ENCODE measurements at regions of chr17 and their contacts with region 1.

Region 1: GRCh38 chr17:28925912-28926365 is 23.1 kb upstream of the DHRS13 start:
- DNase-seq: peak; percentile 70
- ATAC-seq: peak; percentile 94
- H3K4me3 Mint-ChIP-seq: peak overlapping the region; percentile 26
- H3K27ac Mint-ChIP-seq: peak overlapping the region; percentile 88
- H3K4me1 Mint-ChIP-seq: peaks cover 55% of the 10 kb centered on the region
- H3K27me3 Mint-ChIP-seq: no peaks in the 10 kb centered on the region

Region 2: DNA sequence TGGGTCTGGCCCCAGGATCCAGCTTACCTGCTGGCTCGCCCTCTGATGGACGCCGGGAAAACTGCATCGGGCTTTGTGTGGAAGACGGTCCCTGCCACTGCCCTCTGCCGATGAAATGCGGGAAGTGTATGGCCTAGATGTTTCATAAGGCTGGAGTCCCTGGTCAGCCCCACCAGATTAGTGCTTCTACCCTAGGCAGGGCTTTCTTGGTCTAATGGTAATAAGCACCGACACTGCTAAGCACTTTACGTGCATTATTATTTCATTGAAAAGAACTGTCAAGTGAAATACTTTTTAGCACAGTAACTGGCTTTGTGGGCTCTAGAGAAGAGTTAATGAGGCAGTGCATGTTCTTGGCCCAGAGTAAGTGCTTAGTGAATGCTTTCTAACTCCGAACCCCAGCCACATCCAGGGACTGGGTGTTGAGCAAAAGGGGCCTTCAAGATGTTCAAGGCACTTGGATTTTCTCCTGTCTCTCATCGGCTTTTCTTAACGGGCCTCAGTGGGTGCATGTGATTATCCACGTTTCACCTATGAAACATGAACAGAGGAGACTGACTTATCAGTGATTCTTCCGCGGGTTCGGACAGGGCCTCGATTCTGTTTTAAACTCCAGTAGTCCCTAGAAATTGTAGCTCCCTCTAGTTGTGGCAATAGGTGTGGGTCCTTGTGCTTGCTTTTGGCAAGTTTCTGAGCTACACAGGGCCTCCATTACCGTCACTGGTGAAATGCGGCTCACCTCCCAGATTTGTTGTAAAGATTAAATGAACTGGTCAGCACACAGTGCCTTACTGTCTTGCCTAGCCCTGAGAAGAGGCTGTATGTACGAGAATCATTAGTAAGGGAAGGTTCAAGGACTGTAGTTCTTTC is 175.5 kb before region 1 on chr17:
- CTCF ChIA-PET with region 1: interaction called, 19 read pairs
- POLR2A ChIA-PET with region 1: no interaction called
- DNase-seq: peak; percentile 95
- ATAC-seq: peak; percentile 83
- H3K4me3 Mint-ChIP-seq: no peak overlapping the region
- H3K27ac Mint-ChIP-seq: peak overlapping the region; percentile 16
- H3K4me1 Mint-ChIP-seq: peaks cover 34% of the 10 kb centered on the region
- H3K27me3 Mint-ChIP-seq: no peaks in the 10 kb centered on the region

Region 3: GRCh38 chr17:28937044-28937729 is 11.2 kb after region 1 on chr17:
- CTCF ChIA-PET with region 1: interaction called, 8 read pairs
- POLR2A ChIA-PET with region 1: interaction called, 10 read pairs
- DNase-seq: no peak
- ATAC-seq: no peak
- H3K4me3 Mint-ChIP-seq: no peak overlapping the region
- H3K27ac Mint-ChIP-seq: no peak overlapping the region
- H3K4me1 Mint-ChIP-seq: peaks cover 62% of the 10 kb centered on the region
- H3K27me3 Mint-ChIP-seq: no peaks in the 10 kb centered on the region